T-cell (primary cell): ENCODE measurements at regions of chr11 and their contacts with region 1.

Region 1: GRCh38 chr11:73532310-73532709 is 65.6 kb downstream of the FAM168A start:
- DNase-seq: no peak
- ATAC-seq: no peak
- H3K4me3 ChIP-seq: no peak overlapping the region
- H3K4me3 Mint-ChIP-seq: no peak overlapping the region
- H3K27ac ChIP-seq: no peak overlapping the region
- H3K27ac Mint-ChIP-seq: no peak overlapping the region
- H3K4me1 ChIP-seq: peaks cover 0 to 6% of the 10 kb centered on the region in 2 experiments
- H3K4me1 Mint-ChIP-seq: peaks cover 41 to 45% (median 42%) of the 10 kb centered on the region in 3 donors
- H3K27me3 ChIP-seq: no peaks in the 10 kb centered on the region
- H3K27me3 Mint-ChIP-seq: no peaks in the 10 kb centered on the region

Region 2: DNA sequence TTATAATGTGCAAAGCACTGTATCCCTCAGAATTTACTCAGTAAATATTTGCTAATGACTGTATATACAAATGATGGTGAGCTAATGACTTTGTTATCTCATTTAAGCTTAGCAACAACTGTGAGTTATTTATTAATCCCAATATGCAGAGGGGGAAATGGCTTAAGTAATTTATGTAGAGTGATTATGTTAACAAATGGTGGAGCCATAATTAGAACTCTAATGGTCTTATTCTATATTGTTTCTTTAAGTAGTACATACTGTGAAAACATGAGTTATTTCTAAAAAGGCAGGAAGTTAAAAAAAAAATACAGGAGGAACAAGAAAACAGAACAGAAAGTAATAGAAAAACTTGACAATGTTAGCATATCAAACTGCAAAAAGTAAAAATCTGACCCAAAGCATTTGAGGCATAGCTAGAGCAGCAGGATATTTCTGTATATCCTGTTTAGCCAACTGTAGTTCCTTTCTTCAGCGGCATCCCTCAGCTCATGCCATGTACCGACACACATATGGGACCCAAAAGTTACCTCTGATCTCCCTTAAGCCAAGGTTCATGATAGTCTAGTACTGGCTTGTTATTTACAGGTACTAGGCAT is 484.4 kb before region 1 on chr11:
- CTCF ChIA-PET with region 1: no interaction called
- POLR2A ChIA-PET with region 1: interaction called in 1 of 2 experiments, 10 read pairs
- DNase-seq: peak in 1 of 35 experiments; percentile 16
- ATAC-seq: peak in 3 of 4 experiments; percentile 12 to 61 (median 44)
- H3K4me3 ChIP-seq: no peak overlapping the region
- H3K4me3 Mint-ChIP-seq: peak overlapping the region; percentile 26 to 37 (median 37)
- H3K27ac ChIP-seq: peak overlapping the region; percentile 28
- H3K27ac Mint-ChIP-seq: peak overlapping the region; percentile 65 to 77
- H3K4me1 ChIP-seq: peaks cover 5 to 12% of the 10 kb centered on the region in 2 experiments
- H3K4me1 Mint-ChIP-seq: peaks cover 19 to 37% (median 29%) of the 10 kb centered on the region in 3 donors
- H3K27me3 ChIP-seq: no peaks in the 10 kb centered on the region
- H3K27me3 Mint-ChIP-seq: no peaks in the 10 kb centered on the region

Region 3: DNA sequence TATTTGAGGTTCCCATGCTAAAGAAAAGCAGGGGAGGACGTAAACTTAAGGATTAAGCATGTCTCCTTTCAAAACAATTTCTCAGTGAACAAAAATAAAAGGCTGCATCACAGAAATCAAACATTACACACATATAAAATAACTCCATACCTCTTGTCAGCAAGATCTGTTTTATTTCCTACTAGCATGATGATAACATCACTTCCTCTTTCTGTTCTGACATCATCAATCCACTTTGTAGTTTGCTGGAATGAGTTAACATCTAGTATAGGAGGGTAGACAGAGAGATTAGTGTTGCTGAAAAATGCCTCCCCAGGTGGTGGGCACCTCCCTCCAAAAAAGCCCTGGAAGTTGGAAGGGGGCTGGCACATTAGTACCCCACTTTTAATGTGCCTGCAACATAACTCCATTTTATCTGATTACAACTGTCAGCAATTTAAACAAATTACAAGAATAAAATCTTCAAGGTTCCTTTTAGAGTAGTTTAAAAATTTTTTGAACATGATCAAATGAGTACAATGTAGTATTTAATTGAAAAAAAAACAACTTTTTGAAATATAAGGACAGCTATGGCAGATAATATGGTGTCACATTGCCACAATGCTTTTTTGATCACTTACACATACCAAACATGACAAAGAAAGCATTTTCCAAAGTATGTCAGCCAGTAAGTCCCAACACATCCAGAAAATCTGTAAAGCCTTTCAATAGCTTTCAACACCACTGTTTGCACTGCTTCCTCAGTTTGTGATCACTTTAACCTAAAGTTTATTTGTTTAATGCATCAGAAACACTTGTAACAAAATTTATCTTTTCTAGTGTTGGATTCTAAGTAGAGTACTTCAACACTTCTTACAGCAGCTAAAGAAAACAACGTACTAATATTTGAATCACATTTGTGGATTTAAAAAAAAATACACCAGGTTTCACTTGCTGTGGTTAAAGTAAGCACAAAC is 184.1 kb after region 1 on chr11:
- CTCF ChIA-PET with region 1: no interaction called
- POLR2A ChIA-PET with region 1: interaction called in 1 of 2 experiments, 11 read pairs
- DNase-seq: no peak
- ATAC-seq: no peak
- H3K4me3 ChIP-seq: no peak overlapping the region
- H3K4me3 Mint-ChIP-seq: no peak overlapping the region
- H3K27ac ChIP-seq: no peak overlapping the region
- H3K27ac Mint-ChIP-seq: no peak overlapping the region
- H3K4me1 ChIP-seq: no peaks in the 10 kb centered on the region
- H3K4me1 Mint-ChIP-seq: peaks cover 4 to 10% (median 8%) of the 10 kb centered on the region in 3 donors
- H3K27me3 ChIP-seq: no peaks in the 10 kb centered on the region
- H3K27me3 Mint-ChIP-seq: no peaks in the 10 kb centered on the region

Region 4: DNA sequence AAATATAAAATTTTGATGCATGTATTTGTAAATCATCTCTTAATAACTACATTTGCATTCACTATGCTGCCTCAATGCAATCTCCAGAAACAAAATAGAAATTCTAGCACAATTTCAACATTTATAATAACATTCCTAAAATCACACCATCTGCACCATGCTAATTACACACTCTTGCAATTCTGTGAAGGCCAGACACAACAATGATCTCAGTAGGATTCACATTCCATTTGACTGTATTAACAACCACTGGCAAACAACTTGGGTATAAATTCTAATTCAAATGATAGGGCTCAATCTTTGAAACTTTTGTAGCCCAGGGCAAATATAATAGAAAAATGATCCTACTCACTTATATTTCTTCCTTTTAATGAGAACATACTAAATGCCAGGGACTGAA is 202.7 kb after region 1 on chr11:
- CTCF ChIA-PET with region 1: no interaction called
- POLR2A ChIA-PET with region 1: no interaction called
- DNase-seq: no peak
- ATAC-seq: no peak
- H3K4me3 ChIP-seq: no peak overlapping the region
- H3K4me3 Mint-ChIP-seq: no peak overlapping the region
- H3K27ac ChIP-seq: no peak overlapping the region
- H3K27ac Mint-ChIP-seq: no peak overlapping the region
- H3K4me1 ChIP-seq: peaks cover 0 to 11% of the 10 kb centered on the region in 2 experiments
- H3K4me1 Mint-ChIP-seq: peaks cover 24 to 37% (median 30%) of the 10 kb centered on the region in 3 donors
- H3K27me3 ChIP-seq: no peaks in the 10 kb centered on the region
- H3K27me3 Mint-ChIP-seq: no peaks in the 10 kb centered on the region